ENCODE measurements at regions of chr4 and their contacts with region 1.

Region 1: GRCh38 chr4:173243917-173244658 is 75.5 kb downstream of the GALNT7 start:
- DNase-seq: no peak
- H3K4me3 Mint-ChIP-seq: no peak overlapping the region
- H3K27ac Mint-ChIP-seq: no peak overlapping the region
- H3K4me1 Mint-ChIP-seq: peaks cover 18% of the 10 kb centered on the region
- H3K27me3 Mint-ChIP-seq: no peaks in the 10 kb centered on the region
- CTCF ChIP-seq: no peak

Region 2: GRCh38 chr4:173231916-173232315 is 12.2 kb before region 1 on chr4:
- CTCF ChIA-PET with region 1: interaction called, 13 read pairs
- POLR2A ChIA-PET with region 1: interaction called, 5 read pairs
- intact Hi-C with region 1: no loop called
- DNase-seq: peak; percentile 49
- H3K4me3 Mint-ChIP-seq: no peak overlapping the region
- H3K27ac Mint-ChIP-seq: peak overlapping the region; percentile 36
- H3K4me1 Mint-ChIP-seq: peaks cover 2% of the 10 kb centered on the region
- H3K27me3 Mint-ChIP-seq: no peaks in the 10 kb centered on the region
- CTCF ChIP-seq: peak; percentile 44

Measured in MCF 10A (cell line).